IMR-90 (cell line): ENCODE measurements at regions of chr1 and their contacts with region 1.

Region 1: DNA sequence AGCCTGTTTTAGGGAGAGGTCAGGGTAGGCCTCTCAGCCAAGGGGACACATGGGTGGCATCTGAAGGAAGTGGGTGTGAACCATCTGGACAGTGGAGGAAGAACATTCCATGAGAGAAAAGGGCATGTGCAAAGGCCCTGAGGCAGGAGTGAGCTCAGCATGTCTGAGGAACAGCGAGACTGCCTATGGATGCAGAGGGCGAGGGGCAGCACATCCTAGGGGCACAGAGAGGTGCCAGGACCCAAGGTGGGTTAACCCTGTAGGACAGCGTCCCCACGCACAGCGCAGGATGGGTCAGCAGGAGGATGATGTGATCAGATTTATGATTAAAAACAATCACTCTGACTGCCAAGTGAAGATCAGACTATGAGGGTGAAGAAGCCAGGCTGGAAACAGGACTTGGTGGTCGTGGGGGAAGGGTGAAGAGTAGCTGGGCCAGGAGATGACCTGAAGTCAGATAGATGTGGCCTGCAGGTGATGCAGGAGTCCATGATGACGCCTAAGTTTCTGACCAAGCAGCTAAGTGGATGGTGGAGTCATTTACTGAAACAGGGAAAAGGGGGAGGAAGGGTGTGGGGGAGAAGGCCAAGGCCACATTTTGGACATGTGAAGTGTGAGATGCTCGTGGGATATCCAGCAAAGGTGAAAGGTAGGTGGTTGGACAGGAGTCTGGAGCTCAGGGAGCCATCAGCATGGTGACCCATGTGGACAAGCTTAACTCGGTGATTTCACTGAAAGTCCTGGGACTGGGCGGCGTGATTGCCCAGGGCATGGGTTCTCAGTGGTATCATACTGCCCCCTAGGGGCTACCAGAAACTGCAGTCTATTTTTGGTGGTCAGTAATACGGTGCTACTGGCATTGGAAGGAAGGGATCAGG is 37.8 kb downstream of the PABPC4 start:
- DNase-seq: peak; percentile 72
- ATAC-seq: peak; percentile 95
- H3K4me3 ChIP-seq: no peak overlapping the region
- H3K27ac ChIP-seq: no peak overlapping the region
- H3K4me1 ChIP-seq: peaks cover 3% of the 10 kb centered on the region
- H3K27me3 ChIP-seq: no peaks in the 10 kb centered on the region
- CTCF ChIP-seq: peak; percentile 90
- POLR2A ChIP-seq: no peak
- RAD21 ChIP-seq: peak; percentile 89

Region 2: GRCh38 chr1:39266269-39266668 is 272.6 kb before region 1 on chr1:
- CTCF ChIA-PET with region 1: no interaction called
- POLR2A ChIA-PET with region 1: no interaction called
- dilution Hi-C with region 1: no loop called
- in situ Hi-C with region 1: no loop called
- intact Hi-C with region 1: no loop called
- DNase-seq: no peak
- ATAC-seq: no peak
- H3K4me3 ChIP-seq: no peak overlapping the region
- H3K27ac ChIP-seq: no peak overlapping the region
- H3K4me1 ChIP-seq: peaks cover 19% of the 10 kb centered on the region
- H3K27me3 ChIP-seq: no peaks in the 10 kb centered on the region
- CTCF ChIP-seq: peak; percentile 7; the same call in 1 of the 2 replicates
- POLR2A ChIP-seq: no peak
- RAD21 ChIP-seq: no peak

Region 3: DNA sequence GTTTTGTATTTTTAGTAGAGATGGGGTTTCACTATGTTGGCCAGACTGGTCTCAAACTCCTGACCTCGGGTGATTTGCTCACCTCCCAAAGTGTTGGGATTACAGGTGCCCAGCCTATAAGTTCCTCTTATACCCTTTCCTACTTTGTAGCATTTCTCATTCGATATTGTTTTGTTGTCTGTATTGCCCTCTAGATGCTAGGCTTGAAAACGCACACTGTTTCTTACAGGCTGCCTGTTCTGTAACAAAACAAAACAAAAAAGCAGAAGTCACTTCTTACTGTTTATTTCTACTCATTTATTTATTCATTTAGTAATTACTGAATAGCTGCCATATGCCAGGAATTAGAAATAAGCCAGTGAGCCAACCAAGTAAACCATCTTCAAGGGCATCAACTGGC is 184.3 kb before region 1 on chr1:
- CTCF ChIA-PET with region 1: no interaction called
- POLR2A ChIA-PET with region 1: no interaction called
- dilution Hi-C with region 1: no loop called
- in situ Hi-C with region 1: no loop called
- intact Hi-C with region 1: loop called (anchors 5 kb)
- DNase-seq: no peak
- ATAC-seq: 0 out of 2 replicates have a peak, but pooled peaks have one; percentile 28
- H3K4me3 ChIP-seq: no peak overlapping the region
- H3K27ac ChIP-seq: no peak overlapping the region
- H3K4me1 ChIP-seq: no peaks in the 10 kb centered on the region
- H3K27me3 ChIP-seq: no peaks in the 10 kb centered on the region
- CTCF ChIP-seq: no peak
- POLR2A ChIP-seq: no peak
- RAD21 ChIP-seq: no peak

Region 4: GRCh38 chr1:39478126-39478915 is 60.5 kb before region 1 on chr1:
- CTCF ChIA-PET with region 1: no interaction called
- POLR2A ChIA-PET with region 1: no interaction called
- dilution Hi-C with region 1: no loop called
- in situ Hi-C with region 1: no loop called
- intact Hi-C with region 1: loop called (anchors 5 kb)
- DNase-seq: no peak
- ATAC-seq: 0 out of 2 replicates have a peak, but pooled peaks have one; percentile 6
- H3K4me3 ChIP-seq: no peak overlapping the region
- H3K27ac ChIP-seq: peak overlapping the region; percentile 2; the same call in 1 of the 2 replicates
- H3K4me1 ChIP-seq: no peaks in the 10 kb centered on the region; the same call in 1 of the 2 replicates
- H3K27me3 ChIP-seq: no peaks in the 10 kb centered on the region
- CTCF ChIP-seq: no peak
- POLR2A ChIP-seq: no peak
- RAD21 ChIP-seq: no peak

Region 5: GRCh38 chr1:39491146-39491921 is 47.5 kb before region 1 on chr1 and contains the start of gene BMP8A:
- CTCF ChIA-PET with region 1: no interaction called
- POLR2A ChIA-PET with region 1: no interaction called
- dilution Hi-C with region 1: no loop called
- in situ Hi-C with region 1: loop called (anchors 5 kb)
- intact Hi-C with region 1: no loop called
- DNase-seq: no peak
- ATAC-seq: peak; percentile 78
- H3K4me3 ChIP-seq: peak within 1 kb of the TSS; percentile 55
- H3K27ac ChIP-seq: no peak within 1 kb of the TSS
- H3K4me1 ChIP-seq: peaks cover 3% of the 10 kb centered on the region; the same call in 1 of the 2 replicates
- H3K27me3 ChIP-seq: peaks cover 28% of the 10 kb centered on the region
- CTCF ChIP-seq: no peak
- POLR2A ChIP-seq: no peak
- RAD21 ChIP-seq: no peak
- total RNA-seq, gene BMP8A: not detected in 2 replicates